OCI-LY7 (cell line): ENCODE measurements at regions of chr6 and their contacts with region 1.

Region 1: DNA sequence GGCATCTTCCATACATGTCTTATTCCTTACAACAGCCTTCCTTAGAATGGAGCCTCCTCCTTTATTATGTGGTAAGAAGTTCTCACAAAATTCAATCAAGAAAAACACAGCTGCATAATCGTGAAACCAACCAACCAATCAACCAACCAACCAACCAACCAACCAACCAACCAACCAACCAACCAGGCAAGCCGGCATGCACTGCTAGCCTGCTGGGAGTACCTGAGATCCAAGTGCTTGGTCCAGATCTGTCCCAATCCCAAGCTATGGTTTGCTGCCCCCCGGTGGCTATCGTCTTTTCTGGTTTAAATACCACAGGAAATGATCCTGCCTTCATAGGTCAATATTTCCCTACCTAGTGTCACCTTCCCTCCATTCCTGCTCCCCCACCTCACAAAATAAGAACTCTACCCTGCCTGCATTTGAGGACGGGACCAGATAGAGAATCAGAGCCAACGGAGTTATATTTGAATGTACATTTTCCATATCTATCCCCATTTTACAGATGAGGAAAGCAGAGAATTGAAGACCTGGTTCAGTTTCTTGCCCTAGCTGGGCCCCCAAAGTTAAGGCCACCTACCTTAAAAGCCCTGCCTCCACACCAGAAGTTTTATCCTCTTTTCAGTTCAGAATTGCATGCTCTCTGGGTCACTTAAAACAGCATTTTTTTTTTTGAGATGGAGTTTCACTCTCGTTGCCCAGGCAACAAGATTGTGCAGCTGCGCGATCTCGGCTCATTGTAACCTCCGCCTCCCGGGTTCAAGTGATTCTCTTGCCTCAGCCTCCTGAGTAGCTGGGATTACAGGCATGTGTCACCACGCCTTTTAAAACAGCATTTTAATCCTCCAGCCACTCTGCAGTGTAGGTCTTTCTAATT is 27.1 kb downstream of the RAB44 start:
- DNase-seq: peak; percentile 64
- H3K4me3 ChIP-seq: no peak overlapping the region
- H3K27ac ChIP-seq: no peak overlapping the region
- H3K4me1 ChIP-seq: peaks cover 28% of the 10 kb centered on the region
- CTCF ChIP-seq: peak; percentile 79

Region 2: GRCh38 chr6:36623547-36624459 is 100.9 kb before region 1 on chr6:
- CTCF ChIA-PET with region 1: interaction called, 4 read pairs
- POLR2A ChIA-PET with region 1: interaction called, 4 read pairs
- intact Hi-C with region 1: loop called (anchors 1 kb)
- DNase-seq: peak; percentile 83
- H3K4me3 ChIP-seq: no peak overlapping the region
- H3K27ac ChIP-seq: no peak overlapping the region
- H3K4me1 ChIP-seq: peaks cover 22% of the 10 kb centered on the region
- CTCF ChIP-seq: peak; percentile 96

Region 3: DNA sequence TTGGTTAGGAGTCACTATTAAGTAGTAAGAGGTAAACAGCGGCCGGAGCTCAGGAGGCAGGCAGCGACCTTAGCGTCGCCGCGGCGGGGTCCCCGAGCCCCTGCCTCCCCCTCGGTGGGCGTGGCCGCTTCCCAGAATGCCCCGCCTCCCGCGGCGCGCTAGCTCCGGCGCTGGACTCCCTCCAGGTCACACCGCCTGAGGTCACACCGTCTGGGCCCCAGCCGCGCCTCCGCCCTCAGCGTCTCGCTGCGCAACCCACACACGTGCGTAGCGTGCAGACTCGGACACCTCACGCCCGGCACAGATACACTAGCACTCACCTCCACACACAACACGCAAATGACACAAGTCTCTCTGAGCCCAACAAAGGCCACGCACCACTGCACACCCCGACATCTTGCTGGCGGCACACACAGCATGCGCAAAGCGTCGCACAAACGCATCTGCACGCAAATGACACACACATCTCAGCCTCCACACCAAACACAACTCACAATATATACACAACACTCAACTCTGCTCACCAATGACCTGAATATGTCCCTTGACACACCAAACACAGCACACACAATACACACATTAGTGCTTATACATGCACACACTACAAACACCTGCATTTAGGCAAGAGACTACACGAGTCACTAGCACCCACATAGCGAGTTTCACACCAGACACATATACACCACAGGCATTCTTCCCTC is 63.8 kb before region 1 on chr6:
- CTCF ChIA-PET with region 1: no interaction called
- POLR2A ChIA-PET with region 1: interaction called, 4 read pairs
- intact Hi-C with region 1: loop called (anchors 1 kb)
- DNase-seq: no peak
- H3K4me3 ChIP-seq: no peak overlapping the region
- H3K27ac ChIP-seq: no peak overlapping the region
- H3K4me1 ChIP-seq: peaks cover 91% of the 10 kb centered on the region
- CTCF ChIP-seq: no peak

Region 4: GRCh38 chr6:36752886-36753506 is 28.2 kb after region 1 on chr6:
- CTCF ChIA-PET with region 1: no interaction called
- POLR2A ChIA-PET with region 1: interaction called, 20 read pairs
- intact Hi-C with region 1: loop called (anchors 1 kb)
- DNase-seq: peak; percentile 81
- H3K4me3 ChIP-seq: peak overlapping the region; percentile 69
- H3K27ac ChIP-seq: peak overlapping the region; percentile 92
- H3K4me1 ChIP-seq: peaks cover 53% of the 10 kb centered on the region
- CTCF ChIP-seq: no peak